CD8-positive, alpha-beta T cell (primary cell): ENCODE measurements at regions of chr15 and their contacts with region 1.

Region 1: DNA sequence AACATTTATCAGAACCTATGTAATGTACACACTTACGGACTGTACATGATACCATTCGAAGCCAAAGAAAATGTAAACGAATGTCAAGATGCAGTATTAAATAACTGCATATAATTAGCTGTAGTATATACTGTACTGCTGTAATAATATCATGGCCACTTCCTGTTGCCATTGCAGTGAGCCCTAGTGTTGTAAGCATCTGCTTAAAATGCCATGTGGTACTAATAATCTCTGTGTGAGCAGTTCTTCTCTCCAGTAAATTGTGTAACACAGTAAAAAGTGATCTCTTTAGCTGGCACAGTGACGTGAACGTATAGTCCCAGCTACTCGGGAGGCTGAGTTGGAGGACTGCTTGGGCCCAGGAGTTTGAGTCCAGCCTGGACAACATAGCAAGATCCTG is 8.6 kb downstream of the SPG11 start:
- DNase-seq: no peak
- ATAC-seq: no peak
- H3K4me3 ChIP-seq: no peak overlapping the region
- H3K4me3 Mint-ChIP-seq: no peak overlapping the region
- H3K27ac ChIP-seq: no peak overlapping the region
- H3K27ac Mint-ChIP-seq: no peak overlapping the region
- H3K4me1 ChIP-seq: peaks cover 7% of the 10 kb centered on the region
- H3K4me1 Mint-ChIP-seq: peaks cover 42% of the 10 kb centered on the region
- H3K27me3 ChIP-seq: no peaks in the 10 kb centered on the region
- H3K27me3 Mint-ChIP-seq: no peaks in the 10 kb centered on the region
- CTCF ChIP-seq: no peak

Region 2: GRCh38 chr15:44545913-44546802 is 108.7 kb before region 1 on chr15:
- CTCF ChIA-PET with region 1: no interaction called
- POLR2A ChIA-PET with region 1: no interaction called
- intact Hi-C with region 1: no loop called
- DNase-seq: peak in 3 of 9 experiments; percentile 23 to 54 (median 38)
- ATAC-seq: peak; percentile 66
- H3K4me3 ChIP-seq: no peak overlapping the region
- H3K4me3 Mint-ChIP-seq: peak overlapping the region; percentile 27
- H3K27ac ChIP-seq: peak overlapping the region in 1 of 2 experiments; percentile 17
- H3K27ac Mint-ChIP-seq: peak overlapping the region; percentile 52
- H3K4me1 ChIP-seq: peaks cover 30% of the 10 kb centered on the region
- H3K4me1 Mint-ChIP-seq: peaks cover 62% of the 10 kb centered on the region
- H3K27me3 ChIP-seq: no peaks in the 10 kb centered on the region
- H3K27me3 Mint-ChIP-seq: no peaks in the 10 kb centered on the region
- CTCF ChIP-seq: no peak

Region 3: DNA sequence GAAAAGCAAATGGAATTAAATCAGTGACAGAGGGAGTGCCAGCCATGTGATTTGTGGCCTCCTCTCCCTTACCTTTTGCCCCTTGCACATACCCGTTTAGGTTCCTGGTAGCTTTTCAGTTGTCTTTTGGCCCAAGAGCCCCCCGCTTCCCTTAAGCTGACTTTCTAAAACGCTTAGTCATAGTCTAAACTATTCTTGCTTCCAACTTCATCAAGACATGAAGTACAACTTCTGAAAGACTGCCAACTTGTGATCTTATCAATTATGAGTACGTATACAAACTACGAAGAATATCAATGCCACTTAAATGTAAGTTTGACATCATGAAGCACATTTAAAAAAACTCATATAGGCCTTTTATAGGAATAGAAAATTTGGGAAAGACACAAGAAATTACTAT is 56.0 kb before region 1 on chr15:
- CTCF ChIA-PET with region 1: no interaction called
- POLR2A ChIA-PET with region 1: interaction called, 3 read pairs
- intact Hi-C with region 1: loop called in 1 of 2 experiments (anchors 5 kb)
- DNase-seq: no peak
- ATAC-seq: no peak
- H3K4me3 ChIP-seq: no peak overlapping the region
- H3K4me3 Mint-ChIP-seq: no peak overlapping the region
- H3K27ac ChIP-seq: no peak overlapping the region
- H3K27ac Mint-ChIP-seq: peak overlapping the region; percentile 71
- H3K4me1 ChIP-seq: peaks cover 13% of the 10 kb centered on the region
- H3K4me1 Mint-ChIP-seq: peaks cover 13% of the 10 kb centered on the region
- H3K27me3 ChIP-seq: no peaks in the 10 kb centered on the region
- H3K27me3 Mint-ChIP-seq: no peaks in the 10 kb centered on the region
- CTCF ChIP-seq: no peak